ENCODE measurements at regions of chr13 and their contacts with region 1.

Region 1: DNA sequence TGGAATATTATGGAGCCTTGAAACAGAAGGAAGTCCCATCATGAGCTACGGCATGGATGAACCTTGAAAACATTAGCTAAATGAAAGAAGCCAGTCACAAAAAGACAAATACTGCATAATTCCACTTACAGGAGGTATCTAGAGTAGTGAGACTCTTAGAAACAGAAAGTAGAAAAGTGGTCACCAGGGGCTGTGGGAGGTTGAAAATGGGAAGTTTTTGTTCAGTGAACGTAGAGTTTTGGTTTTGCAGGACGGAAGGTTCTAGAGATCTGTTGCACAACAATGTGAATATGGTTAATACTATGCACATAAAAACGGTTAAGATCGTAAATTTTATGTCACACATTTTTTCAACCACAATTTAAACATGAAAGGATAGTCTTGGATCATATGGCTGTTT is 11.9 kb upstream of the SLC10A2 start:
- DNase-seq: no peak
- ATAC-seq: no peak

Region 2: GRCh38 chr13:103031332-103031873 is 46.7 kb before region 1 on chr13:
- intact Hi-C with region 1: no loop called
- DNase-seq: no peak
- ATAC-seq: no peak

Region 3: DNA sequence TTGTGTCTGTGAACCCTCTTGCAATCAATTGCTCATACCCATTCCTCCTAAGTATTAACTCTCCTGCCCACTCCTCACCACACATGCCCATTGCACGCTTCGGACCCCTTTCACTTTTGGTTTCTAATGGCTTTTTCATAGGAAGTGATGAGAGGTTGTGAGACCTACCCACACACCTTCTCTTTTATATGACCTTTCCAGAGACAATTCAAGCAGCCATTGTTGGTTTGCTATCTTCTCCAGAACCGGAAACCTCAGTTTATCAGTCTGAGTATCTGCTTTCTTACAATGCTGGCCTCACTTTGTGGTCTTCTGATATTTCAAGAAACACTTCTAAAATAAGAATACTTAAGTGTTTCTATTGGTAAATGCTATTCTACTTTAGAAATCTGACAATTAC is 1538.8 kb after region 1 on chr13:
- intact Hi-C with region 1: loop called (anchors 5 kb)
- DNase-seq: no peak
- ATAC-seq: no peak

Measured in sciatic nerve (tissue), 2 donors.